Posterior vena cava (tissue), 2 donors: ENCODE measurements at regions of chr11 and their contacts with region 1.

Region 1: GRCh38 chr11:45067966-45068365 is 78.5 kb upstream of the PRDM11 start:
- DNase-seq: no peak

Region 2: DNA sequence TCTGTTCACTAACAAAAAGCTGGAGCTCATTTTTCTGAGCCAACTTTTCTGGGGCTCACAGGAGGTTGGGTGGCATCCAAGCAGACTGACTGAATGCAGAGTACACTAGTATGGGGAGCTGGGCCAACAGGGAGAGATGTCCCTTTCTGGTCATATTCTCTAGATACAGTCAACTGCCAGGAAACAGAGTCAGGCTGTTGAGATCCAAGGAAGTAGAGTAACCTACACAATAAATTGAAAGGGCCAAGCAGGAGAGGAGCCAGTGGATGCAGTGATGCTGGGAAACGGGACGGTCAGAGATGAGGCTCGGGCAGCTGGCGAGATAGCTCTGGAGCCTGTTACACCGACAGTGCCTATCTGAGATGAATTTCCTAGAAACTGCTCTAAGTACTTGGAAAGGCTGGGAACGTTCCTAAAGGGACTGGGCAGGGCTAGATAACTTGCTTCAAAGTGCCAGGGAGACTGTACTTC is 925.6 kb after region 1 on chr11:
- intact Hi-C with region 1: loop called in 1 of 2 experiments (anchors 5 kb)
- DNase-seq: no peak